OCI-LY7 (cell line): ENCODE measurements at regions of chr2 and their contacts with region 1.

Region 1: DNA sequence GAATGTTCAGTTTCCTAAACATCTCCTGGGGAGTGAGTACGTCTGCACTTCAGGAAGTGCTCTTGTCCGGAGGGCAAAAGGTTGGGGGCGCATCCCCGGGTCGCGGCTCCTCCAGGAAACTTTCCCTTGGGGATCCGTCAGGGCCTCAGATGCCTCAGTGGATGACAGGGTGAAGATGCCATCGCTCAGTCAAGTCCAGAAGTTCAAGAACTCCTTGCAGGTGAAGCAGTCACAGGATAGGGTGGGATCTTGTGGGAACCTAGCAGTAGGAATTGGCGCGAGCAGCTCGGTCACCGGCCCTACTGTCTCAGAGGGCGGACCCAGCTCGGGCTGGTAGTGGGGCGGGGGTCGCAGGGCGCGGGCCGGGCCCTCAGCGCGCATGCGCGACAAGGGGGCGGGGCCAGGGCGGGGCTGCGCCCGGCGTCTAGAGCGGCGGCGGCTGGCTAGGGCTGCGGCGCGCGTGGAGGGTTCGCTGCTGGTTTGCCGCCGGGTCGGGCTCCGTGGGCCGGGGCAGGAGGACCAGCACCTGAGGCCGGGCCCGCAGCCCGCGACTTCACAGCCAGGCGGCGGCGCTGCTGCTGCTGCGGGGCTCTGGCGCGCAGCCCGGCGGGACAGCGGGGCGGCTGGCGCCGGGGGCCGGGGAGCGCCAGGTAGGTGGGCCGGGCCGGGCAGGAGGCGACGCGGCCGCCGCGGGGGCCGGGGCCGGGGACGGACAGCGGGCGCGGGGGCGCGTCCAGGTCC is at the start of gene INPP4A:
- DNase-seq: peak; percentile 85
- H3K4me3 ChIP-seq: peak within 1 kb of the TSS; percentile 87
- H3K27ac ChIP-seq: no peak within 1 kb of the TSS
- H3K4me1 ChIP-seq: peaks cover 22% of the 10 kb centered on the region
- CTCF ChIP-seq: peak; percentile 28; the same call in 1 of the 2 replicates
- total RNA-seq, gene INPP4A: 14.3 and 28.5 TPM in 2 replicates

Region 2: DNA sequence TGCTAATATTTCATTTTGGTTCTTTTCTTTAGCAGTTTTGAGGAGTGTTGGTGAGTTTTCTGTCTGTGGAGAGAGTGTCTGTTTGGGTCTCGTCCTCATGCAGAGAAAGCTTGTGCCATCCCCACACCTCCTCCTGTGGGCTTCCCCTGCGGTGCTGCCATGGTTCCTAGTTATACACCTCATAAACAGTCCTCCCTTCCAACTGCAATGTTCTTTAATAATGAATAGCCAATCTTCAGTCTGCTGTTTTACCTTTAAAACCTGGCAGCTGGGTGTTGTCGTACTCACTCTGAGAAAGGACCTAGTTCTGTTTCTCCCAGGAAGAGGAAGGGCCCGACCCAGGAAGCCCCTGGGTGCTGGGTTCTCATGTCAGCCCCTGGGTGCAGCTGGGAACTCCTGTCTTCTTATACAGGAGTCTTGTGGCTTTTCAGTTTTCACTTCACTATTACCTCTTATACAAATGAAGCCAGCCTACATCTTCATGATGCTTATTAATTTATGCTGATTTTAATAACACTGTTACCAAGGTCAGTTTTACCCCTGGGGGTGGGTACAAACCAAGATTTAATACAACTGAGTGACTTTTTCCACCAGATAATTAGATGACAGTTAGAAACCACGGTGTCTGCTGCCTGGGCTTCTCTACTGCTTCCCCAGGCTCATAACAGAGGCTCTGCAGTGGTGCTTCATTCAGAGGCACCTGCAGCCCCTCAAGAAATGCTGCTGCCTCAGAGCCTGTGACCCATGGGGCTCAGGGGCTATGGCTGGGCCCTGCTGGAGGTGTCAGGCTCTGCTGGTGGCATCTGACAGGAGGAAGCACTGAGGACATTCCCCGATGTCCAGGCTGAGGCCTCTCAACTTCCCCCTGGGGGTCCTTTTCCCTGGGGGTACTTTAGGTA is 104.6 kb after region 1 on chr2:
- CTCF ChIA-PET with region 1: no interaction called
- POLR2A ChIA-PET with region 1: interaction called, 4 read pairs
- intact Hi-C with region 1: loop called (anchors 5 kb)
- DNase-seq: peak; percentile 74
- H3K4me3 ChIP-seq: peak overlapping the region; percentile 29
- H3K27ac ChIP-seq: peak overlapping the region; percentile 81
- H3K4me1 ChIP-seq: peaks cover 55% of the 10 kb centered on the region
- CTCF ChIP-seq: no peak

Region 3: GRCh38 chr2:98608116-98608999 is 163.8 kb after region 1 on chr2 and contains the starts of genes COA5 and UNC50:
- CTCF ChIA-PET with region 1: no interaction called
- POLR2A ChIA-PET with region 1: no interaction called
- intact Hi-C with region 1: loop called (anchors 10 kb)
- DNase-seq: peak; percentile 95
- H3K4me3 ChIP-seq: peak within 1 kb of the TSS; percentile 88
- H3K27ac ChIP-seq: peak within 1 kb of the TSS; percentile 68
- H3K4me1 ChIP-seq: peaks cover 31% of the 10 kb centered on the region
- CTCF ChIP-seq: peak; percentile 18
- total RNA-seq, gene COA5: 40.0 and 50.1 TPM in 2 replicates
- total RNA-seq, gene UNC50: 19.2 and 24.4 TPM in 2 replicates